Dendritic cell treated with granulocyte-macrophage colony-stimulating factor and Interleukin-4, amounts not matched to agents 40 ng/mL and 50 ng/mL, for 4 days (primary cell): ENCODE measurements at regions of chr11 and their contacts with region 1.

Region 1: GRCh38 chr11:809287-810039 is at the start of gene RPLP2:
- H3K4me3 Mint-ChIP-seq: peak within 1 kb of the TSS; percentile 92
- H3K27ac Mint-ChIP-seq: peak within 1 kb of the TSS; percentile 97
- H3K4me1 Mint-ChIP-seq: peaks cover 51% of the 10 kb centered on the region
- H3K27me3 Mint-ChIP-seq: no peaks in the 10 kb centered on the region

Region 2: GRCh38 chr11:842370-843002 is 33.0 kb after region 1 on chr11 and contains the starts of genes POLR2L and TSPAN4:
- intact Hi-C with region 1: loop called (anchors 5 kb)
- H3K4me3 Mint-ChIP-seq: peak within 1 kb of the TSS; percentile 81
- H3K27ac Mint-ChIP-seq: peak within 1 kb of the TSS; percentile 93
- H3K4me1 Mint-ChIP-seq: peaks cover 75% of the 10 kb centered on the region
- H3K27me3 Mint-ChIP-seq: peaks cover 16% of the 10 kb centered on the region